Activated CD4-positive, alpha-beta T cell treated with anti-CD3 and anti-CD28 coated beads, Interleukin-2, amount 10 ng/mL, durations not matched to agents 24 days and 14 days (primary cell): ENCODE measurements at regions of chr6 and their contacts with region 1.

Region 1: DNA sequence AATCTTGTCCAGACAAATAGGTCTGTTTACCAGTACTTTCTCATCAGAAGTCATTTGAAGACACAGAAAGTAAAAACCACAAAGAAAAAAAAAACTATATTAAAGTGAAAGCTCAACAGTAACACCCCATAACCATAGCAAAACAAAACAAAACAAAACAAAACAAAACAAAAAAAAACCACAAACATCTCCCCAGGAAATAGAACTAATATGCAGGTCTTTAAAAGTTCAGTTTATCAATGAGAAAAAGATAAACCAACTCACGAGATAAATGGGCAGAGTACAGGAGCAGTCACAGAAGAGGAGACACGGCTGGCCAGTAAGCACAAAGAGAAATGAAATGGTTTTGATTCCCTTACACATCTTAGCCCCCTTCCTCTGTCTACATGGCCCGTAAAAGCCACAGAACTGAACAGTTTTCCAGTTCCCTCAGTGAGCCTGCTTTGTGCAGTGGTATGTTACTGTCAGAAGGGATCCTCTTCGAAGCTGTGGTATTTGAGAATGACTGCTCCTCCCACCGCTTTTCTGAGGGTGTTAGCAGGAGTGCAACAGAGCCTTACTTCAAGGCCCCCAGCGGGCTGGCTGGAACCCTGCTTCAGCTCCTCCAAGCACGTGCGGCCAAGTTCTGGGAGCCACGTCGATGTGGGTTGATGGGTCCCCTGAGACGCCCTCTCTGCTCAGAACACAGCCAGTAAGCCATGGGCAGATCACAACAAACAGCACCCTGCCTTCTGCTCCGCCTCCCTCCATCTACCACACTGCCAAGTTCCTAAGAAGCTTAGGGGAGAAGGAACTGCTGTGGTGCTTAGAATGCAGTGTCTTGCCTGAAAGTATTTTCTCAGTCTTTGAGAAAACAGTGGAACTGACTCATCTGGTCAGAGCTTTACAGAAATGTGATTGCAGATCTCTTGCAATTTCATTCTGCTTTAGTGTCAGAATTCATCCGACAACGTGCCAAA is 14.0 kb downstream of the UST start:
- DNase-seq: peak; percentile 80
- H3K4me3 Mint-ChIP-seq: peak overlapping the region; percentile 63
- H3K27ac Mint-ChIP-seq: peak overlapping the region; percentile 74
- H3K4me1 Mint-ChIP-seq: peaks cover 32% of the 10 kb centered on the region
- H3K27me3 Mint-ChIP-seq: peaks cover 63% of the 10 kb centered on the region

Region 2: DNA sequence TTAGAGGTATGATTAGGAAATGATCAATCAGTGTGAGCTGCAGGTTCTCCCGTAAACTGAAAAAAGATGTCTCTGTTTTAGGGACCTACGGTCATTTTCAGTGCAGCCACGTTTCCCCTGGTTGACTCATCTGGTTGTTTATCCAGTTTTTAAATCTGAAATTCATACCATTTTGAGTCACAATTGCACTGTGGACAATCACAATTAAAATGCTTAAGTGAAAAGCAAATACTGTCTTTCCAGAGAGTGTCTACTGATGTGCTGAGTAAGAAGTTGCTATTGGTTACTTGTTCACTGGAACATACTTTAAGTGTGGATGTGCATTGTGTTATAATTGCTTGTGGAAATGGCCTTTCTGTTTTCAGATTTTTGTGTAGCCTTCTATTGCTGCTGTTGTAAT is 723.4 kb before region 1 on chr6:
- intact Hi-C with region 1: no loop called
- DNase-seq: no peak
- H3K4me3 Mint-ChIP-seq: no peak overlapping the region
- H3K27ac Mint-ChIP-seq: no peak overlapping the region
- H3K4me1 Mint-ChIP-seq: no peaks in the 10 kb centered on the region
- H3K27me3 Mint-ChIP-seq: no peaks in the 10 kb centered on the region

Region 3: GRCh38 chr6:148711833-148712654 is 48.8 kb before region 1 on chr6:
- intact Hi-C with region 1: loop called (anchors 1 kb)
- DNase-seq: no peak
- H3K4me3 Mint-ChIP-seq: no peak overlapping the region
- H3K27ac Mint-ChIP-seq: no peak overlapping the region
- H3K4me1 Mint-ChIP-seq: no peaks in the 10 kb centered on the region
- H3K27me3 Mint-ChIP-seq: peaks cover 5% of the 10 kb centered on the region

Region 4: GRCh38 chr6:148746363-148747144 is 14.3 kb before region 1 on chr6 and contains the start of gene UST:
- intact Hi-C with region 1: loop called (anchors 1 kb)
- DNase-seq: peak; percentile 83
- H3K4me3 Mint-ChIP-seq: peak within 1 kb of the TSS; percentile 94
- H3K27ac Mint-ChIP-seq: peak within 1 kb of the TSS; percentile 42
- H3K4me1 Mint-ChIP-seq: peaks cover 11% of the 10 kb centered on the region
- H3K27me3 Mint-ChIP-seq: peaks cover 76% of the 10 kb centered on the region
- total RNA-seq, gene UST: 0.70 and 0.90 TPM in 2 replicates

Region 5: DNA sequence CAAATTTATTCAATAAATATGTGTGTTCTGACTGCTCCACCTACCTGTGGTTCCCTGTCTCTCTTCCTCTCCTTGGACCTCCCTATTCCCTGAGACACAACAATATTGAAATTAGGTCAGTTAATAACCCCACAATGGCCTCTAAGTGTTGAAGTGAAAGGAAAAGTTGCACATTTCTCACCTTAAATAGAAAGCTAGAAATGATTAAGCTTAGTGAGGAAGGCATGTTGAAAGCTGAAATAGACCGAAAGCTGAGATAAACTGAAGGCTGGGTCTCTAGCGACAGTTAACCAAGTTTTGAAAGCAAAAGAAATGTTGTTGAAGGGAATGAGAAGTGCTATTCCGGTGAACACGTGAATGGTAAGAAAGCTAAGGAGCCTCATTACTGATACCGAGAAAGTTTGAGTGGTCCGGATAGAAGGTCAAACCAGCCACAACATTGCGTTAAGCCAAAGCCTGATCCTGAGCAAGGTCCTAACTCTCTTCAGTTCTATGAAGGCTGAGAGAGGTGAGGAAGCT is 20.1 kb after region 1 on chr6:
- intact Hi-C with region 1: loop called (anchors 2 kb)
- DNase-seq: no peak
- H3K4me3 Mint-ChIP-seq: peak overlapping the region; percentile 4
- H3K27ac Mint-ChIP-seq: no peak overlapping the region
- H3K4me1 Mint-ChIP-seq: peaks cover 3% of the 10 kb centered on the region
- H3K27me3 Mint-ChIP-seq: peaks cover 14% of the 10 kb centered on the region

Region 6: DNA sequence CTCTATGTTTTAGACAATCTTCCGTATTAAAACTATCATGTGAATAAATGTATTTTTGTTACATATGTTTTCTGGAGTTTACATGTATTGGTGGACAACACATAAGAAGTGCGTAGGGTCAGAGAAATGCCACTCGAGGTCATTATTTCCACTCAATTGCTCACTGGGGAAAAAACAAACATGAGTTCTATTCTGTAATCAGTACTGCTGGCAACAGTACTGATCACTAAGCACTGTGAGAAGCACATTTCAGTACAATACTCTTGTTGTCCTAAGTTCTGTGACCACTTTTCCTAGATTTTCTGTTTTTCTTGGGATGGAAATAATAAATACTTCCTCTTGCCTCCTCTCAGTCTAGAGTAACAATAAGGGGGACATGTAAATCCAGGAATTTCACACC is 30.5 kb after region 1 on chr6:
- intact Hi-C with region 1: no loop called
- DNase-seq: no peak
- H3K4me3 Mint-ChIP-seq: no peak overlapping the region
- H3K27ac Mint-ChIP-seq: no peak overlapping the region
- H3K4me1 Mint-ChIP-seq: no peaks in the 10 kb centered on the region
- H3K27me3 Mint-ChIP-seq: peaks cover 13% of the 10 kb centered on the region

Region 7: DNA sequence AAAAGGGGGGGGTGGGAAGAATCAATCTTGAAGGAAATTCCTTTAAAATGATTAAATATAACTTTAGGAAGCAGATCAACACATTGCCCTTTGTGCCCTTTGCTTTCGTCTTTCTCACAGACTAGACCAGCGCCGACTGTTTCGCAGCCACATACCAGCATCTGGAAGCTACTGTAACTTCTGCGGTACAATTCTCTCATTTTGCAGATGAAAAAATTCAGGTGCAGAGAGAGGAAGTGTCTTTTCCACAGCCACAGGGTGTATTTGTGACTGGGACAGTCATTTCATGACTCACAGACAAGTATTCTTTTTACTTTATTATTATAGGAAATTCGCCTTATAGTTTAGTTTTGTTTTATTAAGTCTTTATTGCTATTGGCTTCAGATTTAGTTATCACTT is 70.2 kb after region 1 on chr6:
- intact Hi-C with region 1: loop called (anchors 5 kb)
- DNase-seq: no peak
- H3K4me3 Mint-ChIP-seq: no peak overlapping the region
- H3K27ac Mint-ChIP-seq: no peak overlapping the region
- H3K4me1 Mint-ChIP-seq: peaks cover 7% of the 10 kb centered on the region
- H3K27me3 Mint-ChIP-seq: peaks cover 16% of the 10 kb centered on the region